ENCODE measurements at regions of chr6 and their contacts with region 1.

Region 1: DNA sequence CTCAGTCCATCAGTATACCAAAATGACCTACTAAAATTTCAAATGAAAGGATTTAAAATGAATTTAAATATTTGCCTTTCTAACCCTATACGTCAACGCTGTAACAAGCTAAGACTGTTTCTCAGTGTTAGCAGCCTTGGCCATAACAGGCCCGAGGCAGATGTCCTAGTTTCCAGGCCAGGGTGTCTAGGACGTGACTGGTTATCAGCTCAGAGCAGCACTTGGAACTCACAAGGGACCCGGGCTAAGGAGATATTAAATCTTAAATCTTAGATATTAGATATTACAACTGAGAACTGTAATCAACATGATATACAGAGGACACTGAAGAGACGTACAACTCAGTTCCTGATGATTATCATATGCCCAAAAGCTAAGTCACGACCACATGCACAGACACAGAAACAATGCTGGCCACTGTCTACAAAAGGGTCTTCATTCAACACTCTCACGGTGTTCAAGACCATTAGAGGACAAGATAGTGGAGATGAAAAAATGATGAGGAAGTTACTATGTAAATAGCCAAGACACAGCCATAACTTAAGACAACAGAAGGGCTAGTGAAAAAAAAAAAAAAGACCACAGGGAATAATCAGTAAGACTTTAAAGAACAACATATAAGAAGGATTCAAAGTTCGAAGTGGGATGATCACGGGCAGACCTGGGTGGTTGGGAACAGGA is at the start of gene CLDN20:
- DNase-seq: no peak
- H3K4me3 Mint-ChIP-seq: no peak within 1 kb of the TSS
- H3K27ac Mint-ChIP-seq: no peak within 1 kb of the TSS
- H3K4me1 Mint-ChIP-seq: peaks cover 20% of the 10 kb centered on the region
- H3K27me3 Mint-ChIP-seq: no peaks in the 10 kb centered on the region
- total RNA-seq, gene CLDN20: not detected

Region 2: GRCh38 chr6:155188707-155189496 is 74.6 kb before region 1 on chr6:
- CTCF ChIA-PET with region 1: interaction called, 3 read pairs
- POLR2A ChIA-PET with region 1: interaction called, 16 read pairs
- DNase-seq: no peak
- H3K4me3 Mint-ChIP-seq: peak overlapping the region; percentile 20
- H3K27ac Mint-ChIP-seq: no peak overlapping the region
- H3K4me1 Mint-ChIP-seq: peaks cover 35% of the 10 kb centered on the region
- H3K27me3 Mint-ChIP-seq: no peaks in the 10 kb centered on the region